ENCODE measurements at regions of chr1 and their contacts with region 1.

Region 1: GRCh38 chr1:230642263-230642959 is at the start of gene COG2:
- DNase-seq: peak; percentile 94
- H3K4me3 ChIP-seq: peak within 1 kb of the TSS; percentile 4 to 95 (median 47)
- H3K27ac ChIP-seq: no peak within 1 kb of the TSS
- H3K4me1 ChIP-seq: peaks cover 12% of the 10 kb centered on the region
- H3K27me3 ChIP-seq: peaks cover 6 to 8% of the 10 kb centered on the region in 2 experiments
- CTCF ChIP-seq: peak; percentile 100
- POLR2A ChIP-seq: peak; percentile 65
- total RNA-seq, gene COG2: 20.7 and 24.2 TPM in 2 replicates

Region 2: DNA sequence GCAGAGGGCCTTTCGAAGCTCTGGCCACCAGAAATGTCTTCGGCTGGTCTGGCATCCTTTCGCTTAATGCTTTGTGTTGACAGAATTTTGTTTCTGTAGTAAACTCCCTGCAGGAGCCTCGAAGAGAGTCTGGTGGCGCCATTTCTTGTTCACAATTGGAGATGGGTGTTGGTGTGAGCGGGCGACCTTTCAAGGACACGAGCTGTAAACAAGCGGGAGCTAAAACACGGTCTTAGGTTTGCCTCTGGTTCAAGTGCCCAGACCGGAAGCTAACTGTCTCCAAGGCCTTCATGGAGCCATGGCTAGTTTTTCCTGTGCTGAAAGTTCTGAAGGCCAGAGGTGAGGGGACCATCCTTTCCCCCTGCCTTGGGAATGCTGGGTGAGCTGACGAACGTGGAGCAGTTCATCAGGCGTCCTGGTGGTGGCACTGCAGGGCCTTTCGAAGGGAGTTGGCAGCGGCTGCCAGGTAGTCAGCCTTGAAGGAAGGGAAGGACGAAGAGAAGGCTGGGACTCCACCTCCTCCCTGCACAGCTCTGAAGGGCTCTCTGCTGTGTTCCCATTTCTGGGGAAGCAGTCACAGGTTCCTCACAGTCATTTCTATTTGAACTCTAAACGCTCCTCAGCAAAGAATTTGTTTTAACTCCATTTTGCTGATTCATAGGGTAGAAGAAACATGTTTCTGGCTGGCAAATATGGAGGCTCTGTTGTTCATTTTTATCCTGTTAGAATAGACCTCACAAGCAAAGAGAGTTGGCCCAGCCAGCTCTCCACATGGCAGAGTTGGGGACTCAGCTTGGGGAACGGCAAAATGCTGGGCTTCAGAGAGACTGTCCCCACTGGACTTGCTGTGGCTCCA is 981.2 kb before region 1 on chr1:
- CTCF ChIA-PET with region 1: no interaction called
- POLR2A ChIA-PET with region 1: no interaction called
- dilution Hi-C with region 1: no loop called
- intact Hi-C with region 1: loop called (anchors 5 kb)
- DNase-seq: peak; percentile 61
- H3K4me3 ChIP-seq: no peak overlapping the region
- H3K27ac ChIP-seq: no peak overlapping the region
- H3K4me1 ChIP-seq: peaks cover 17% of the 10 kb centered on the region
- H3K27me3 ChIP-seq: no peaks in the 10 kb centered on the region
- CTCF ChIP-seq: peak; percentile 82 to 92
- POLR2A ChIP-seq: no peak

Region 3: DNA sequence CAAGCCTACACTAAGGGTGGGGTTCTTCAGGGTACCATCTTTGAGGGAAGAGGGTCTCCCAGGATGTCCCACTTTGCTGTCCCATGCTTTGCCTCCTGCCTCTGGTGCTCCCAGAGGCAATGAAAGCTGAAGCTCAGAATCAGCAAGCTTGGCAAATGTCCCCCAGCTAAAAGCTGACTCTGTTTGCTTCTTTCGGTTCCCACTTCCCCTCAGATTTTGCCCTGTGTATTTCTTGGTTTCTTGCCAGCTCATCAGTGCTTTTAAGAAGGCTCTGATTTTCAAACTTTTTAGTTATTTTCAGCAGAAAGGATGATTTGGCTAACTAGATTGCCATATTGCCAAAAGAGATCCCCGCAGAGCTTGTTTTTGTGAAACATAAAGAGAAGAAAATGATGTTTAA is 33.2 kb before region 1 on chr1:
- CTCF ChIA-PET with region 1: no interaction called
- POLR2A ChIA-PET with region 1: no interaction called
- dilution Hi-C with region 1: no loop called
- intact Hi-C with region 1: no loop called
- DNase-seq: no peak
- H3K4me3 ChIP-seq: no peak overlapping the region
- H3K27ac ChIP-seq: no peak overlapping the region
- H3K4me1 ChIP-seq: no peaks in the 10 kb centered on the region
- H3K27me3 ChIP-seq: no peaks in the 10 kb centered on the region
- CTCF ChIP-seq: no peak
- POLR2A ChIP-seq: no peak

Region 4: DNA sequence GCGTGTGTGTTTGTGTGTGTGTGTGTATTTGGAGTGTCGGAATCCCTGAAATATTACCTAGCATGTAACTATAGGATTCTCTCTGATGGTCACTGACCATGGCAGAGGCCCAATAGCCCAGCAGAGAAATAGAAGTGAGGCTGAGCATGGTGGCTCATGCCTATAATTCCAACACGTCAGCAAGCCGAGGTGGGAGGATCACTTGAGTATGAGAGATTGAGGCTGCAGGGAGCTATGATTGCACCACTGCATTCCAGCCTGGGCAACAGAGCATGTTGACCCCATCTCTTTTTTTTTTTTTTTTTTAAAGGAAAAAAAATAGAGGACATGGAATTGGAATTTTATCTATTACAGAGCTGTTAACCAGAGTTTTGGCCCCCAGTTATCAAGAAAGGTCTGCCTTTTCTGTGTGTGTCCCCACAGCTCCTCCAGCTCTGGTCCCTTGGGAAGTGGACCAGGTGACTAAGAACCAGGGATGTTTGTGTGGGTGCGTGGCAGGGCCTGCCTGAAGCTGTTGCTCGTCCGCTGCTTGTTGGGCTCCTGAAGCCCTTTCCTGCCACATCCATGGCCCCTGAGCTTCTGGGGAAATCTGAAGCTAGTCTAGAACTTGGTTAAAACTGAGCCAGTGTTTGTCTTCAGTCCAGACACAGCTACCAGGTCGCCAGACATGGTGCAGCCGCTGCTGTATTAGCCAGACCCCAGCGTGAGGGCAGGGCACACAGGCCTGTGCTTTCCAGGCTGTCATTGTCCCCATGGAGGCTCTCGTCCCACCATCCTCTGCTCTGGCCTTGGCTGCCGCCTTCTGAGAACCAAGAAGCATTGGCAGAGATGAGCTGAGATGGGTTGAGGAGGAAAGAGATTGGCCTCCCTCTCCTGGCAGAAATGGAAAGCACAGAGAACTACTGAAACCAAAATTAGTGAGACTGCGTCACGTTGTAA is 130.3 kb after region 1 on chr1:
- CTCF ChIA-PET with region 1: no interaction called
- POLR2A ChIA-PET with region 1: no interaction called
- dilution Hi-C with region 1: no loop called
- intact Hi-C with region 1: loop called (anchors 5 kb)
- DNase-seq: no peak
- H3K4me3 ChIP-seq: no peak overlapping the region
- H3K27ac ChIP-seq: no peak overlapping the region
- H3K4me1 ChIP-seq: no peaks in the 10 kb centered on the region
- H3K27me3 ChIP-seq: no peaks in the 10 kb centered on the region
- CTCF ChIP-seq: no peak
- POLR2A ChIP-seq: no peak

Region 5: DNA sequence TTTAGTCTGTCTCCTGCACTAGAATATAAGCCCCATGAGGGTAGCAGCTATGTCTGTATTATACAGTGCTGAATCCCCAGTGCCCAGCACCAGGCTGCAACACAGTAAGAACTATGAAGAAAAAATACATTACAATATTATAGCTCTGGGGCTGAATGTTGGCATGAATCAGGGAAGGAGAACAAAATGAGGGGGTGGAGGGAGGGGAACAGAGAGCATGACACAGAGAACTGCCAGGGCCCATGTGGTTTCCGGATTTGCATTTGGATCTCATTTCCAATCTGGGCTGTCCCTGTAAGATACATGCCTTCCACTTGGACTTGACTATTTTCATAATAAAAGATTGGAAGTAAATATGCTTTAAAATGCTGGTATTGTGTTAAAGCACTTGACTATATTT is 190.1 kb after region 1 on chr1:
- CTCF ChIA-PET with region 1: no interaction called
- POLR2A ChIA-PET with region 1: no interaction called
- dilution Hi-C with region 1: no loop called
- intact Hi-C with region 1: no loop called
- DNase-seq: no peak
- H3K4me3 ChIP-seq: no peak overlapping the region
- H3K27ac ChIP-seq: no peak overlapping the region
- H3K4me1 ChIP-seq: no peaks in the 10 kb centered on the region
- H3K27me3 ChIP-seq: no peaks in the 10 kb centered on the region
- CTCF ChIP-seq: no peak
- POLR2A ChIP-seq: no peak

Region 6: GRCh38 chr1:230917284-230918135 is 275.1 kb after region 1 on chr1:
- CTCF ChIA-PET with region 1: no interaction called
- POLR2A ChIA-PET with region 1: no interaction called
- dilution Hi-C with region 1: no loop called
- intact Hi-C with region 1: loop called (anchors 2 kb)
- DNase-seq: peak; percentile 72
- H3K4me3 ChIP-seq: no peak overlapping the region
- H3K27ac ChIP-seq: no peak overlapping the region
- H3K4me1 ChIP-seq: no peaks in the 10 kb centered on the region
- H3K27me3 ChIP-seq: no peaks in the 10 kb centered on the region
- CTCF ChIP-seq: peak; percentile 73 to 77
- POLR2A ChIP-seq: no peak

Region 7: GRCh38 chr1:231528172-231529029 is 886.0 kb after region 1 on chr1 and contains the start of gene TSNAX:
- CTCF ChIA-PET with region 1: no interaction called
- POLR2A ChIA-PET with region 1: no interaction called
- dilution Hi-C with region 1: no loop called
- intact Hi-C with region 1: loop called (anchors 5 kb)
- DNase-seq: peak; percentile 97
- H3K4me3 ChIP-seq: peak within 1 kb of the TSS; percentile 35 to 75 (median 45)
- H3K27ac ChIP-seq: peak within 1 kb of the TSS; percentile 86
- H3K4me1 ChIP-seq: peaks cover 15% of the 10 kb centered on the region
- H3K27me3 ChIP-seq: no peaks in the 10 kb centered on the region
- CTCF ChIP-seq: no peak
- POLR2A ChIP-seq: peak; percentile 94
- total RNA-seq, gene TSNAX: 26.3 and 26.4 TPM in 2 replicates

Measured in endothelial cell of umbilical vein (primary cell).